Calu3 (cell line): ENCODE measurements at regions of chr17 and their contacts with region 1.

Region 1: DNA sequence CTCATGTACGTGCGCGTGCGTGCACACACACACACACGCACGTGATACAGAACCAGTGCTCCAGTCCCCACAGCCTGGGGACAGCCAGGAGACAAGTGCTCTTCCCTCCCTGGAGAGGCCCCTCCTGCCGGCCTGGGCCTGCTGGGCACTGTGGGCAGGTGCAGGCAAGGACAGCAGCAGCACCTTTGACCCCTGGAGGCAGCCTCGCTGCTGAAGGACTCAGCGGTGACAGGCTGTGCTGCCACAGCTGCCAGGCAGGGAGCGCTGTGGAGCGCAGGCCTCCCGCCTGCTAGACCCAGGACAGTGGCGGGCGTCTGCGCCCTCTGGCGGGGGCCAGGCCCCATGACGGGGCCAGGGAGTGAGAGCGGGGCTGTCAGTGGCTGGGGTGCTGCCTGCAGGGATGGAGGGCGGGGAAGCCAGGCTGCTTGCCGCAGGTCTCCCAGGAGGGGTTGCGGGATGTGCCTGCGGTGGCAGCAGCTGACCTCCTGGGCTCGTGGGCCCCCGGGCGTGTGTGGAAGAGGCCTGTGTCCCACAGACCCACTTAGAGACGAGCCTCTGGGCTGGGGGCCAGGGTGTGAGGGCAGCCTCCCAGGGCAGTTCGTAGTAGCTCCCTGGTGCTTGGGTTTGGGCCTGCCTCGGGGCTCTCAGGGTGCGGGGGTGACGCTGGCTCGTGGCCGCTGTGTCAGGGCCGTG is 63.5 kb upstream of the PVALEF start:
- DNase-seq: peak; percentile 93
- H3K4me3 Mint-ChIP-seq: no peak overlapping the region
- H3K27ac Mint-ChIP-seq: no peak overlapping the region
- H3K4me1 Mint-ChIP-seq: peaks cover 11% of the 10 kb centered on the region
- H3K27me3 Mint-ChIP-seq: no peaks in the 10 kb centered on the region
- CTCF ChIP-seq: peak; percentile 100

Region 2: GRCh38 chr17:80981062-80981902 is 120.5 kb before region 1 on chr17:
- CTCF ChIA-PET with region 1: interaction called, 4 read pairs
- intact Hi-C with region 1: loop called (anchors 5 kb)
- DNase-seq: peak; percentile 43
- H3K4me3 Mint-ChIP-seq: peak overlapping the region; percentile 27
- H3K27ac Mint-ChIP-seq: no peak overlapping the region
- H3K4me1 Mint-ChIP-seq: peaks cover 13% of the 10 kb centered on the region
- H3K27me3 Mint-ChIP-seq: peaks cover 60% of the 10 kb centered on the region
- CTCF ChIP-seq: peak; percentile 89

Region 3: GRCh38 chr17:81165246-81166032 is 63.7 kb after region 1 on chr17 and contains the start of gene PVALEF:
- CTCF ChIA-PET with region 1: no interaction called
- intact Hi-C with region 1: no loop called
- DNase-seq: no peak
- H3K4me3 Mint-ChIP-seq: peak within 1 kb of the TSS; percentile 64
- H3K27ac Mint-ChIP-seq: no peak within 1 kb of the TSS
- H3K4me1 Mint-ChIP-seq: no peaks in the 10 kb centered on the region
- H3K27me3 Mint-ChIP-seq: peaks cover 53% of the 10 kb centered on the region
- CTCF ChIP-seq: no peak
- total RNA-seq, gene PVALEF: not detected in 2 replicates

Region 4: GRCh38 chr17:81294856-81295680 is 193.3 kb after region 1 on chr17 and contains the start of gene SLC38A10:
- CTCF ChIA-PET with region 1: no interaction called
- intact Hi-C with region 1: no loop called
- DNase-seq: peak; percentile 93
- H3K4me3 Mint-ChIP-seq: peak within 1 kb of the TSS; percentile 98
- H3K27ac Mint-ChIP-seq: peak within 1 kb of the TSS; percentile 91
- H3K4me1 Mint-ChIP-seq: peaks cover 8% of the 10 kb centered on the region
- H3K27me3 Mint-ChIP-seq: peaks cover 3% of the 10 kb centered on the region
- CTCF ChIP-seq: no peak
- total RNA-seq, gene SLC38A10: 120 and 121 TPM in 2 replicates